Gastrocnemius medialis (tissue), 4 donors: ENCODE measurements at regions of chr17 and their contacts with region 1.

Region 1: DNA sequence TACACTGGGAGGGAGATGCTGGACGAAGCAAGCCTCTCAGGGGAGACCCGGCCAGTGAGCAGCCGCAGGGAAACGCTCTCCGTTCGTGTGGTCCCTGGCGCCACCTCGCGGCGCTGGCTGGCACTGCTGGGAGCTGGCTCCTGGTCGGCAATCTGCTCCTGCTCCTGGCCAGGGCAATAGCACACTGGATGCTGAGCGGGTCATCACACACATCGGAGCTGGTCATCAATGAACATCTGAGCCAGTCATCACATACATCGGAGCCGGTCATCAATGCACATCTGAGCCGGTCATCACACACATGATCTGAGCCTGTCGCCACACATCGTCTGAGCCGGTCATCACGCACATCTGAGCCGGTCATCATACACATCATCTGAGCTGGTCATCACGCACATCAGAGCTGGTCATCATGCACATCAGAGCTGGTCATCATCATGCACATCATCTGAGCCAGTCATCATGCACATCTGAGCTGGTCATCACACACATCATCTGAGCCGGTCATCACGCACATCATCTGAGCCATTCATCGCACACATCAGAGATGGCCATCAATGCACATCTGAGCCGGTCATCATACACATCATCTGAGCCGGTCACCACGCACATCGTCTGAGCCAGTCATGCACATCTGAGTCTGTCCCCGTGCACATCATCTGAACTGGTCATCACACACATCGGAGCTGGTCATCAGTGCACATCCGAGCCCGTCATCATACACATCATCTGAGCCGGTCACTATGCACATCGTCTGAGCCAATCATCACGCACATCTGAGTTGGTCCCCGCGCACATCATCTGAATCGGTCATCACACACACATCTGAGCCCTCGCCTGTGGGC is 217.3 kb downstream of the RBFOX3 start:
- DNase-seq: peak; percentile 39 to 54
- ATAC-seq: peak; percentile 66 to 69
- H3K4me3 ChIP-seq: no peak overlapping the region
- H3K27ac ChIP-seq: no peak overlapping the region
- H3K4me1 ChIP-seq: no peaks in the 10 kb centered on the region
- H3K27me3 ChIP-seq: peaks cover 46 to 79% (median 69%) of the 10 kb centered on the region in 3 donors
- CTCF ChIP-seq: peak; percentile 75 to 91 (median 83)
- POLR2A ChIP-seq: no peak

Region 2: DNA sequence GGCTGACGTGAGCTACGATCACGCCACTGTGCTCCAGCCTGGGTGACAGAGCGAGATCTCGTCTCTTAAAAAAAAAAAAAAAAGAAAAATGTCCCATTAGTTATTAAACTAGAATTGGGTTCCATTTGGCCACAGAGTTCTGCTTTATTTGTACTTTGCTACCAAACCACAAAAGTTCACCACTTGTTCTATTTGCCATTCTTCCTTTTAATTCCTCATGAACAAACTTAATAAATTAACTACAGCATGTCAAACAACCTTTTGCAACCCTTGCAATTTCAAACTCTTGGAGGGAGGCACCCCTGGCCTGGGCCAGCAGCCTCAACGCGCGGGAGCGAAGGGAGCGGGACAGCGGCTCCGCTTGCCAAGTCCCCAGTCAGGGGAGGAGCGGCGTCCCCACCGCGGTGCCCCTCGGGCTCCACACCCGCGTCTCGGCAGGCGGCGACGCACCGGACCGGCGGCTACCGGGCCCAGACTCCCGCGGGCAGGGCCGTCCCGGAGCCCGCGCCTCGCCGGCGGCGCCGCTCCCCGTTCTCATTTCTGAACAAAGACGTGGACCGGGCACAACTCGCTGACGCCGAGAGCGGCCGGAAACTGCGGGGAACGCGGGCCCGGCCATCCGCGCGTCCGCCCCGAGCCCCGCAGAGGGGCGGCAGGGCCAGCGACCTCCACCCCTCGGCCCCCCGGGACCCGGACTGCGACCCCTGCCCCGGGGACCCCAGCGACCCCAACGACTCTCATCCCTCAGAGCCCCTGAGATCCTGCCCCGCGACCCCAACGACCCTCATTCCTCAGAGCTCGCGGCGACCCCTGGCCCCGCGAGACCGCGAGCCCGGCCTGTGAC is 612.3 kb before region 1 on chr17:
- in situ Hi-C with region 1: no loop called
- intact Hi-C with region 1: no loop called
- DNase-seq: peak in 1 of 2 donors; percentile 56
- ATAC-seq: peak; percentile 16 to 24
- H3K4me3 ChIP-seq: peak overlapping the region; percentile 60 to 96 (median 90)
- H3K27ac ChIP-seq: peak overlapping the region; percentile 82 to 99 (median 90)
- H3K4me1 ChIP-seq: peaks cover 25 to 29% of the 10 kb centered on the region in 2 donors
- H3K27me3 ChIP-seq: no peaks in the 10 kb centered on the region
- CTCF ChIP-seq: no peak
- POLR2A ChIP-seq: no peak

Region 3: DNA sequence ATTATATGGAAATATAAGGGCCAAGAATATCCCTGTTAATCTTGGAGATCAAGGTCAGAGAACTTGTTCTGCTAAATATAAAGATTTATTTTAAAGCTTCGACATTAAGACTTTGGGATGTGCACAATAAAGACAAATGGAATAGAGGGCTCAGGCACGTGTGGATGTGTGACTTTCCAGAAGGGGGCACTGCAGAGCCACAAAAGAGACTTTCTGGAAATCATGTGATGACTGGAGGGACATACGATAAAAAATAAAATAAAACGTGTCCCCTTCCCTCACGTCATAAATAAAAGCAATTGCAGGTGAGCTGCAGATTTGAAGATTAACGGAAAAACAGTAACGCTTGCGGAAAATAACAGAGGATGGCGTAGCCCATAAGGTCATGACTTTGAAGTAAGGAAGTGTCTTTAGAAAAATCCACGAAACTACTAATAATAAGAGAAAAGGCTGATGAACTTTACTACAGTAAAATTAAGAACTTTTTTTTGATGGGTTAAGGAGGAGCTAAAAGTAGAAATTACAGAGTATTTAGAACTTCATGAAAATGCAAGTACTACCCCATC is 328.4 kb before region 1 on chr17:
- in situ Hi-C with region 1: loop called (anchors 25 kb)
- intact Hi-C with region 1: loop called (anchors 1 kb)
- DNase-seq: peak in 1 of 2 donors; percentile 38
- ATAC-seq: peak; percentile 78 to 85
- H3K4me3 ChIP-seq: no peak overlapping the region
- H3K27ac ChIP-seq: no peak overlapping the region
- H3K4me1 ChIP-seq: peaks cover 0 to 4% of the 10 kb centered on the region in 2 donors
- H3K27me3 ChIP-seq: no peaks in the 10 kb centered on the region
- CTCF ChIP-seq: peak in 4 of 5 experiments; percentile 62 to 72 (median 68)
- POLR2A ChIP-seq: no peak

Region 4: GRCh38 chr17:79074650-79075445 is 318.7 kb before region 1 on chr17 and contains the start of gene ENGASE:
- in situ Hi-C with region 1: loop called (anchors 25 kb)
- intact Hi-C with region 1: no loop called
- DNase-seq: peak; percentile 89 to 93
- ATAC-seq: peak; percentile 83 to 89
- H3K4me3 ChIP-seq: peak within 1 kb of the TSS; percentile 73 to 88 (median 76)
- H3K27ac ChIP-seq: peak within 1 kb of the TSS; percentile 87 to 98 (median 93)
- H3K4me1 ChIP-seq: peaks cover 32 to 38% of the 10 kb centered on the region in 2 donors
- H3K27me3 ChIP-seq: no peaks in the 10 kb centered on the region
- CTCF ChIP-seq: no peak
- POLR2A ChIP-seq: peak; percentile 83 to 86
- total RNA-seq, gene ENGASE: 5.1 to 14.2 (median 9.3) TPM

Region 5: GRCh38 chr17:79087428-79088143 is 306.0 kb before region 1 on chr17:
- in situ Hi-C with region 1: no loop called
- intact Hi-C with region 1: loop called (anchors 1 kb)
- DNase-seq: peak in 1 of 2 donors; percentile 60
- ATAC-seq: peak; percentile 65 to 71
- H3K4me3 ChIP-seq: no peak overlapping the region
- H3K27ac ChIP-seq: no peak overlapping the region
- H3K4me1 ChIP-seq: peaks cover 10 to 13% of the 10 kb centered on the region in 2 donors
- H3K27me3 ChIP-seq: peaks cover 4 to 15% (median 7%) of the 10 kb centered on the region in 3 donors
- CTCF ChIP-seq: peak; percentile 81 to 94 (median 91)
- POLR2A ChIP-seq: no peak

Region 6: GRCh38 chr17:79188048-79188447 is 205.5 kb before region 1 on chr17:
- in situ Hi-C with region 1: loop called in 3 of 4 experiments (anchors 25 kb)
- intact Hi-C with region 1: loop called (anchors 1 kb)
- DNase-seq: no peak
- ATAC-seq: no peak
- H3K4me3 ChIP-seq: no peak overlapping the region
- H3K27ac ChIP-seq: no peak overlapping the region
- H3K4me1 ChIP-seq: no peaks in the 10 kb centered on the region
- H3K27me3 ChIP-seq: peaks cover 55 to 72% (median 65%) of the 10 kb centered on the region in 3 donors
- CTCF ChIP-seq: peak; percentile 19 to 65 (median 48)
- POLR2A ChIP-seq: no peak

Region 7: DNA sequence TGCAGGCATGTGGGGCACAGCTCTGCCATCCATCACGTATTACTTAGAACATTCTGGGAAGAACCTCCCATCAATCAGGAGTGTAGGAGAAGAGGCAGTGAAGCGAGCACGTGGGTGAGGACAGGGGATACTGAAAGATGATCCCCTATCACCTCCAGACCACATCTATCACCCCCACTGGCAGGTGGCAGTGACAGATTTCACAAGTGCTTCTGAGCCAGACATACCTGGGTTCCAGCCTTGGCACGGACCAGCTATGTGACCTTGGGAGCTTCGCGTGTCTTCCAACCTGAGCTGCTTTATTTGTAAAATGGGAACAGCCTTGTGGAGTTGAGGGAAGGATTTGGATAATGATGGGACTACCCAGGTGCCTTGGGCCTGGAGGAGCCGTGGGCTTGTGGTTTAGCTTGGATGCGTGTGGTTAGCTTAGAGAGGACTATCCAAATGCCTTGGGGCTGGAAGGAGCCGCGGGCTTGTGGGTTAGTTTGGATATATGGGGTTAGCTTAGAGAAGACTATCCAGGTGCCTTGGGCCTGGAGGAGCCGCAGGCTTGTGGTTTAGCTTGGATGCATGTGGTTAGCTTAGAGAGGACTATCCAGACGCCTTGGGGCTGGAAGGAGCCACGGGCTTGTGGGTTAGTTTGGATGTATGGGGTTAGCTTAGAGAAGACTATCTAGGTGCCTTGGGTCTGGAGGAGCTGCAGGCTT is 112.6 kb before region 1 on chr17:
- in situ Hi-C with region 1: no loop called
- intact Hi-C with region 1: no loop called
- DNase-seq: no peak
- ATAC-seq: no peak
- H3K4me3 ChIP-seq: no peak overlapping the region
- H3K27ac ChIP-seq: no peak overlapping the region
- H3K4me1 ChIP-seq: peaks cover 0 to 14% of the 10 kb centered on the region in 2 donors
- H3K27me3 ChIP-seq: peaks cover 0 to 2% (median 1%) of the 10 kb centered on the region in 3 donors
- CTCF ChIP-seq: no peak
- POLR2A ChIP-seq: no peak

Region 8: DNA sequence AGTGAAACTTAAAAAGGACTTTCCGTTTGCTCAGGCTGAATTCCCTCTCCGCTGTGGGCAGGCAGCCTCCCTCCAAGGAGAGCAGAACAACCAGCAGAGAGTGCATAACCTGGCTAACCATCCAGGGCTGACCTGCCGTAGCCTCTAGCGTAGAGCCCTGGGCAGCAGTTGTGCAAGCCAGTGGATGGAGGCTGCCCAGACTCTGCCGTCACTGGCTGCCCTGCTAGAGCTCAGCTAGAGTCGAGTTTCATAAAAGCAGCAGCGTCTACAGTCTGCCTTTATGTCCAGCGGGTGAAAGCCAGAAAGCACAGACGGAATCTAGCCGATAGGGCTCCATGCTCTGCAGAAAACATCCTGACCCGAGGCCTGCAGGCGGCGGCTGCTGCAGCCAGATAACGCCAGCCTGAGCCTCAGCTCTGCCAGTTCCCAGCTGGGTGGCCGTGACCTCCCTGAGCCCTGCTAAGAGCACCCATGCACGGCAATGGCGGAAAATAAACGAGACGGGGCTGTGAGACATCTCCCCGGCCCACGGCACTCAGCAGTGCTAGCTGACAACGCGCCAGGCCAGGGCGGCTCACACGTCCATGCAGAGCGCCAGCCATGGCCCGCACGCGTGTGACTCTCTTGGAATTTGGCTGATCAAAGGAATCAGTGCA is 87.7 kb before region 1 on chr17:
- in situ Hi-C with region 1: no loop called
- intact Hi-C with region 1: loop called (anchors 1 kb)
- DNase-seq: peak; percentile 65 to 86
- ATAC-seq: peak; percentile 86 to 90
- H3K4me3 ChIP-seq: peak overlapping the region in 2 of 4 donors; percentile 3 to 31
- H3K27ac ChIP-seq: peak overlapping the region; percentile 71 to 94 (median 82)
- H3K4me1 ChIP-seq: peaks cover 30 to 38% of the 10 kb centered on the region in 2 donors
- H3K27me3 ChIP-seq: peaks cover 0 to 2% (median 0%) of the 10 kb centered on the region in 3 donors
- CTCF ChIP-seq: peak in 1 of 5 experiments; percentile 29
- POLR2A ChIP-seq: no peak

Region 9: GRCh38 chr17:79325709-79326430 is 67.7 kb before region 1 on chr17:
- in situ Hi-C with region 1: no loop called
- intact Hi-C with region 1: no loop called
- DNase-seq: no peak
- ATAC-seq: no peak
- H3K4me3 ChIP-seq: no peak overlapping the region
- H3K27ac ChIP-seq: no peak overlapping the region
- H3K4me1 ChIP-seq: no peaks in the 10 kb centered on the region
- H3K27me3 ChIP-seq: peaks cover 0 to 26% (median 22%) of the 10 kb centered on the region in 3 donors
- CTCF ChIP-seq: no peak
- POLR2A ChIP-seq: no peak